ENCODE measurements at regions of chr1 and their contacts with region 1.

Region 1: DNA sequence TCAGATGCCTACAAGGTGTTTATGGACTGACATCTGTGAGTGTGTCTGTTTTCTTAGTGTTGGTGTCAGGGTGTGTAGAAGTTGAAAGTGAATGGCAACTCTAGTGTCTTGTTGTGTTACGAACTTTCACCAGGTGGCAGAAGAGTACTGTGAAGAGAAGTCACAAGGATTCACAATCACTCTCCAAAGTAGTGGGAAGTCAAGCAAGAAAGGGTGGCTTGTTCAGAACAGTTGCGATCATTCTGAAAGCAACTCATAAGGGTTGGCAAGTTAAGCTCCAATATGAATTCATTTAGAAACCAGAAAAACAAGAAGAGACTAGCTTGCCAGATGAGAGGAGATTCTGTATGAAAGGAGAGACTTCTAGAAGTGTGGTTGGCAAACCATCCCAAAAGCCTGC is 86.1 kb downstream of the FASLG start:
- DNase-seq: peak; percentile 34
- H3K4me3 Mint-ChIP-seq: no peak overlapping the region
- H3K27ac Mint-ChIP-seq: no peak overlapping the region
- H3K4me1 Mint-ChIP-seq: peaks cover 27% of the 10 kb centered on the region
- H3K27me3 Mint-ChIP-seq: peaks cover 45% of the 10 kb centered on the region

Region 2: DNA sequence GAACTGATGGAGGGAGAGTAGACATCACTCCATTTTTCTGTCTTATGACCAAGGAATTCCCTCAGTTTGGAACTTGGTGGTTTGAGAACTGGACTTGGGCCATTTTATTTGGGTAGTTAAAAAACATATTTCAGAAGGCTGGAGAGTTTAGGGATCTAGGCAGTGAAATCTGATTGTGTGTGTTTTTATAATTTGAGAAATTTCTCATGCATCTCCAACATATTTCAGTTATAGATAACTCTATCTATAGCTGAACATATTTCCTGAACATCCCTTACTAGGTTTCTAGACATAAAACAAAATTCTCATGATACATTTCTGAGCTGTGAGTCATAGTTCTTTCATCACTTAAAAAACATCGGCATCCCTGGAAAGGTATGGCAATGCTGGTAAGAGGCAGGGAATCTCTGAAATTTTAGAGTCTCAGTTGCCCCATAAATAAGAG is 16.6 kb after region 1 on chr1:
- intact Hi-C with region 1: loop called (anchors 1 kb)
- DNase-seq: no peak
- H3K4me3 Mint-ChIP-seq: no peak overlapping the region
- H3K27ac Mint-ChIP-seq: no peak overlapping the region
- H3K4me1 Mint-ChIP-seq: peaks cover 42% of the 10 kb centered on the region
- H3K27me3 Mint-ChIP-seq: peaks cover 6% of the 10 kb centered on the region

Region 3: GRCh38 chr1:172789866-172790644 is 45.0 kb after region 1 on chr1:
- intact Hi-C with region 1: no loop called
- DNase-seq: no peak
- H3K4me3 Mint-ChIP-seq: no peak overlapping the region
- H3K27ac Mint-ChIP-seq: no peak overlapping the region
- H3K4me1 Mint-ChIP-seq: no peaks in the 10 kb centered on the region
- H3K27me3 Mint-ChIP-seq: peaks cover 17% of the 10 kb centered on the region

Region 4: DNA sequence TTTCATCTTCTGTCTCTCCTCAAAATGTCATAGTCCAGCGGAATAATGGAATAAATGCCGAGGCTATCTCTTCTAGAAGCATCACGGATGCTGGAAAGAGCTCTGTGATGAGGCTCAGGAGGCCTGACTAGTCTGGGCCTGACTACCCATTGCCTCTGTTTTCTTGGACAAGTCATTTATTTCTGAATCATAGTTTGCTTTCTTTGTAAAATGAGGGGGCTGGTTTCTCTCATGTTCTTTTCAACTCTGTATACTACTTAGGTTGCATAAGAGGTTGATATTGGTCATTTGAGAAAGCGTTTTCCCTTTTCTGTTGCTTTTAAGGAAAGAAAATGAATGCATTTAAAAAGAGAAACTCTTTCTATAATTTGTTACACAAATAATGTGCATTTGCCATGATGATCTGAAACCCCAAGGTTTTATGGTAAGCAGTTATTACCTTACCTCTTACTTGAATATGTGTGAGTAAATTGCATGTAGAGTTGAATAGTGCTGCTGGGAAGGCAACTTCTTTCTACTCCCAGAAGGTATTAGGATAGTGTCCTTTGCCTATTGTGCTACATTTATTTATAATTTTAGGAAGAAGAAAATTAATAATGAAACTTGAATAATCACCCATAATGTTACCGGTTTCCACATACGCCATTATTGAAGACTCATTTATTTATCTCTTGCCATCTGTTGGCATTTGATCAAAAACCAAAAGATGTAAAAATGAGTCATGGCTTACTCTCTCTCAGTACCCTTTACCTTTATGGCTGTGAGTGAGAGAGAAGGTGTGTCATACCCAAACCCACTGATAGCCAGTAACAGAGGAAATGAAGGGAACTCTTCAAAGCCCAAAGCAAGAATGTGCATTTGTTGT is 93.0 kb after region 1 on chr1:
- intact Hi-C with region 1: loop called (anchors 1 kb)
- DNase-seq: peak; percentile 29
- H3K4me3 Mint-ChIP-seq: no peak overlapping the region
- H3K27ac Mint-ChIP-seq: peak overlapping the region; percentile 26
- H3K4me1 Mint-ChIP-seq: peaks cover 46% of the 10 kb centered on the region
- H3K27me3 Mint-ChIP-seq: peaks cover 65% of the 10 kb centered on the region

Region 5: DNA sequence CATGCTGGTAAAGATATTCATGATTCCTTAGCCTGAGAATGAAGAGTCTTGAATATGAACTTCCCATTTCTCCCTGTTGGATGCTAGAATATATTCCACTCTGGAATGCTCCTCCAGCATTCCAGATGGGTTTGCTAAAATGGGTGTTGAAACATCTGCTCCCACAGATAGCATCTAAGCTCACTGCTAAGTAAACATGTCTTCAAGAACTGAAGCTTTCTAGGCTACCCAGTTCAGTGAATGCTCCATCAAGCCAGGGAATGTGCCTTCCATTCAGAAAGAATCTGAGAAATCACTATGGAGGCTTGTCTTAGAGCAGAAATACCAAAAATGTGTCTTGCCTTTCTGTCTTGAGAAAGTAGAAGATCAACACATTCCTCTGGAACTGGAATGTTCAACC is 224.6 kb after region 1 on chr1:
- intact Hi-C with region 1: loop called (anchors 1 kb)
- DNase-seq: no peak
- H3K4me3 Mint-ChIP-seq: no peak overlapping the region
- H3K27ac Mint-ChIP-seq: no peak overlapping the region
- H3K4me1 Mint-ChIP-seq: peaks cover 10% of the 10 kb centered on the region
- H3K27me3 Mint-ChIP-seq: peaks cover 15% of the 10 kb centered on the region

Region 6: GRCh38 chr1:173297798-173298391 is 552.9 kb after region 1 on chr1:
- intact Hi-C with region 1: loop called (anchors 1 kb)
- DNase-seq: peak; percentile 15
- H3K4me3 Mint-ChIP-seq: peak overlapping the region; percentile 16
- H3K27ac Mint-ChIP-seq: peak overlapping the region; percentile 37
- H3K4me1 Mint-ChIP-seq: peaks cover 24% of the 10 kb centered on the region
- H3K27me3 Mint-ChIP-seq: peaks cover 8% of the 10 kb centered on the region

Region 7: GRCh38 chr1:173714759-173715537 is 969.9 kb after region 1 on chr1 and contains the start of gene KLHL20:
- intact Hi-C with region 1: loop called (anchors 2 kb)
- DNase-seq: peak; percentile 84
- H3K4me3 Mint-ChIP-seq: peak within 1 kb of the TSS; percentile 93
- H3K27ac Mint-ChIP-seq: peak within 1 kb of the TSS; percentile 98
- H3K4me1 Mint-ChIP-seq: peaks cover 30% of the 10 kb centered on the region
- H3K27me3 Mint-ChIP-seq: peaks cover 14% of the 10 kb centered on the region
- total RNA-seq, gene KLHL20: 17.8 and 18.3 TPM in 2 replicates

Region 8: GRCh38 chr1:174159252-174160108 is 1414.5 kb after region 1 on chr1 and contains the start of gene RABGAP1L:
- intact Hi-C with region 1: loop called (anchors 10 kb)
- DNase-seq: peak; percentile 89
- H3K4me3 Mint-ChIP-seq: peak within 1 kb of the TSS; percentile 96
- H3K27ac Mint-ChIP-seq: peak within 1 kb of the TSS; percentile 96
- H3K4me1 Mint-ChIP-seq: peaks cover 66% of the 10 kb centered on the region
- H3K27me3 Mint-ChIP-seq: no peaks in the 10 kb centered on the region
- total RNA-seq, gene RABGAP1L: 40.6 and 41.0 TPM in 2 replicates